ENCODE measurements at regions of chr20 and their contacts with region 1.

Region 1: DNA sequence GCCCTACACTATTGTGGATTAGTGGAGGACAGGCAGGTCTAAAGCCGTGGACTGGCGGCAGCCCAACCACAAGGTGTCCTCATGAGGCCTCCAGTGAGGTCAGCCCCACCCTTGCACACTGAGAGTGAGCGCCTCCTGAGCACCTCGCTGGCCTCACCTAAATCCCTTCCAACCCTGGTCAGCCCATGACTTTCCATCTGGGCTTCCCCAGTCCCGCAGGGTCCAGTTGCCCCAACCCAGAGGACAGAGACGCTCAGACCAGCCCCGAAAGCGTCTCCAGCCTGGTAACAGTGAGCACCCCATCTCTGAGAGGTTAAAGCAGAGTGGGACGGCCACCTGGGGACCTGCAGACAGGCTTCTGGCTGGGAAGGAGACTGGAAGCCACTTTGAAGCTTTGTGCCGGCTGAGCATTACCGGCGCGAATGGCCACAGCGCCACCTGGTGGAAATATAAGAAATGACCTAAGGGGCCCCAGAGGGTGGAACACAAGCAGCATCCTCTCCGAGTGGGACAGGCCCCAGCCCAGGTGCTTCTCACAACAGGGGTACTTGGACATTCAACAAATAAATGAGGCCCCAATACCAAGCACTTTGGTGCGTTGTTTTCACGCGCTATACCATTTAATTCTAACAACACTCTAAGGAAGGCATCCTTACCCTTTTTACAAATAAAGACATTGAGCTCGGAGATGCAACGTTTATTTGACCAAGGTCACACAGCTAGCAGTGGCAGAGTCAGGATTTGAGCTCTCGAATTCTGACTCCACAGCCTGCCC is 65.7 kb upstream of the TOP1 start:
- DNase-seq: peak; percentile 78
- ATAC-seq: peak; percentile 89
- H3K4me3 Mint-ChIP-seq: no peak overlapping the region
- H3K27ac Mint-ChIP-seq: no peak overlapping the region
- H3K4me1 Mint-ChIP-seq: peaks cover 8% of the 10 kb centered on the region
- H3K27me3 Mint-ChIP-seq: no peaks in the 10 kb centered on the region
- CTCF ChIP-seq: peak; percentile 96

Region 2: GRCh38 chr20:40697541-40697940 is 265.4 kb before region 1 on chr20:
- CTCF ChIA-PET with region 1: no interaction called
- POLR2A ChIA-PET with region 1: no interaction called
- intact Hi-C with region 1: no loop called
- DNase-seq: no peak
- ATAC-seq: no peak
- H3K4me3 Mint-ChIP-seq: no peak overlapping the region
- H3K27ac Mint-ChIP-seq: no peak overlapping the region
- H3K4me1 Mint-ChIP-seq: no peaks in the 10 kb centered on the region
- H3K27me3 Mint-ChIP-seq: peaks cover 31% of the 10 kb centered on the region
- CTCF ChIP-seq: no peak

Region 3: DNA sequence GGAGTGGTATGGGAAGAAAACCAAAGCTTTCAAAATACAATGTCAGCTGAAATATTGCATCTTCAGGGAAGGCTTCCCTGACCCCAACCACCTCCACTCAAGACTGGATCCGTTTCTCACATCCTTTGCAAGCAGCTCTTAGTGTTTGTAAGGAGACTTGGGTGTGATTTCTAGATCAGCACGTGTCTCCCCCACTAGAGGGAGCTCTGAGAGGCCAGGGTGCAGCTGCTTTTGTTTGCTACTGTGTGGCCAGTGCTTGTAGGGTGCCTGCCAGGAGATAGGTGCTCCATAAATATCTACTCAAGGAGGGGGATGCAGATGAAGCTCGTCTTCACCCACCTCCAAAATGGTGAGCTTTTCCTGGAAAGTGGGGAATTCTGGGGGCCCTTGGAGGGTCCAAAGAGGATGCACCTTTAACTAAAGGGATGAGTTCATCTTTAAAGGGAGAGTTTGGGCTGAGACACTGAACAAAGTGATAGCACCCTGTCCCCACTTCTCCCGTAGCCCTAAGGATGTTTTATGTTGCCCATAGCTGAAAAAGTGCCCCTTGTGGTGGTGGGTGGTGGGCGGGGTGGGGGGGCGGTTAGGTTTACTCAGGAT is 221.3 kb before region 1 on chr20:
- CTCF ChIA-PET with region 1: interaction called, 71 read pairs
- POLR2A ChIA-PET with region 1: no interaction called
- intact Hi-C with region 1: loop called (anchors 5 kb)
- DNase-seq: peak; percentile 60
- ATAC-seq: peak; percentile 45
- H3K4me3 Mint-ChIP-seq: no peak overlapping the region
- H3K27ac Mint-ChIP-seq: no peak overlapping the region
- H3K4me1 Mint-ChIP-seq: no peaks in the 10 kb centered on the region
- H3K27me3 Mint-ChIP-seq: peaks cover 2% of the 10 kb centered on the region
- CTCF ChIP-seq: peak; percentile 66

Region 4: DNA sequence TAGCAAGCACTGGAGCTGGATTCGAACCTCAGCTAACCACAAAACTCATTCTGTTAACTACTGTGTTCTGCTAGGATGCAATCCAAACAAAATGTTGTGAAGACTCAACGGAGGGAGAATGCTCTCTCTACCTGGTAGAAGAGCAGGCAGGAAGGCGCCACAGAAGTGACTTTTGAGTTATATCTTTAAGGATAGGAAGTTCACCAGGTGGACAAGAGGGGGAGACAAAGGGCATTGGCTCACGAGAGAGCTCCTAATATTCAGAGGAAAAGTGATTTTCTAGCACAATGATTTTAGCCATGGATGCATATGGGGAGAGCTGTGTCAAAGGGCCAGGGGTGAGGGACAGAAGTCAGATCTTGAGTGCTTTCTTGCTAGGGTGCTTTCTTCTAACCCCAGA is 165.5 kb before region 1 on chr20:
- CTCF ChIA-PET with region 1: interaction called, 10 read pairs
- POLR2A ChIA-PET with region 1: no interaction called
- intact Hi-C with region 1: no loop called
- DNase-seq: no peak
- ATAC-seq: no peak
- H3K4me3 Mint-ChIP-seq: no peak overlapping the region
- H3K27ac Mint-ChIP-seq: no peak overlapping the region
- H3K4me1 Mint-ChIP-seq: no peaks in the 10 kb centered on the region
- H3K27me3 Mint-ChIP-seq: peaks cover 5% of the 10 kb centered on the region
- CTCF ChIP-seq: no peak

Region 5: DNA sequence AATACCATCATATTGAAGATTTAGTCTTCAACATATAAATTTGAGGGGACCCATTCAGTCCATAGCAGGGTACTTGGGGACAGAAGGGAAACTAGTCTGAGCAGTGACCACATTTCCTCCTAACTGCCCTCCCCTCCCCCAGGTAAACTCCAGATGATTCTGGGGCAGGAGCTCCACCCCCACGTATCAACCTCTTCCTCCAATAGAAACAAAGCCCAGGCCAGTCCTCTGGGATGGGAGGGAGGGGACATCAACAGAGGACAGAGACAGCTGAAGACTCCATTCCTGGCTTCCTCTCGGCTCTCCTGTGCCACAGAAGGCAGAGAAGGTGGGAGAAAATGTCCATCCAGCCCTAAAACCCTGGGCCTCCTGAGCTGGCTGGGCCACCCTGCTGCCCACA is 19.3 kb before region 1 on chr20:
- CTCF ChIA-PET with region 1: interaction called, 12 read pairs
- POLR2A ChIA-PET with region 1: no interaction called
- intact Hi-C with region 1: no loop called
- DNase-seq: no peak
- ATAC-seq: no peak
- H3K4me3 Mint-ChIP-seq: no peak overlapping the region
- H3K27ac Mint-ChIP-seq: no peak overlapping the region
- H3K4me1 Mint-ChIP-seq: no peaks in the 10 kb centered on the region
- H3K27me3 Mint-ChIP-seq: no peaks in the 10 kb centered on the region
- CTCF ChIP-seq: no peak

Measured in activated CD8-positive, alpha-beta T cell treated with anti-CD3 and anti-CD28 coated beads for 36 hours (primary cell).